PC-9 (cell line): ENCODE measurements at regions of chr2 and their contacts with region 1.

Region 1: DNA sequence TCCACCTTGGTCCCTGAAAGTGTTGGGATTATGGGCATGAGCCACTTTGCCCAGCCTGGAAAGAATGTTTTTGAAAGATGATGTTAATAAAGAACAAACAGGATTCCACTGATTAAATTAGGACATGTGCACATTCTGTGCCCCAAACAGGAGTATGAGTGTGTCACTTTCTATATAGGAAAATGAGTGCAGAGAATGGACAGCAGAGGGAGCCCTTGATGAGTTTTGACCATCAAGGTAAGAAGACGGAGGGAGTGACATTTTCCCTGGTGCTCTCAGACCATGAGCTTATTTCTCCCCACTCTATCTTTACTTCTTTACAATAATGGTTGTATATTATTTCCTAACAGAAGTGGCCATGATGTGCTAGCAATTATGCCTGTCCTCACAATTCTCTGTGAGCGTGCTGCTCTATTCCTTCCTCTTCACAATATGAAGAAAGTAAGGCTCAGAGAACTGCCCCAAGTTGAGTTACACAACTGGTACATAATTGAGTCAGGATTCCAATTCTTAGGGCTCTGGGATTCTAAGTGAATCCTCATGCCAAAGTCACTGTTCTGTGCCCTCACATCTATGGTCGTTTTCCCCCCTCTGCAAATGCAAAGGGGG is 20.6 kb downstream of the RPL37A start:
- DNase-seq: peak; percentile 53 to 64
- H3K4me3 ChIP-seq: no peak overlapping the region
- H3K27ac ChIP-seq: no peak overlapping the region
- H3K4me1 ChIP-seq: 0 out of 2 replicates have a peak, but pooled peaks cover 3% of the 10 kb centered on the region
- H3K27me3 ChIP-seq: no peaks in the 10 kb centered on the region
- CTCF ChIP-seq: peak; percentile 86

Region 2: GRCh38 chr2:216188956-216189355 is 330.3 kb before region 1 on chr2:
- CTCF ChIA-PET with region 1: no interaction called
- POLR2A ChIA-PET with region 1: no interaction called
- intact Hi-C with region 1: no loop called
- DNase-seq: peak in 1 of 2 experiments; percentile 36
- H3K4me3 ChIP-seq: no peak overlapping the region
- H3K27ac ChIP-seq: peak overlapping the region; percentile 37; the same call in 1 of the 2 replicates
- H3K4me1 ChIP-seq: 0 out of 2 replicates have a peak, but pooled peaks cover 10% of the 10 kb centered on the region
- H3K27me3 ChIP-seq: no peaks in the 10 kb centered on the region
- CTCF ChIP-seq: no peak

Region 3: GRCh38 chr2:216636551-216637450 is 117.5 kb after region 1 on chr2:
- CTCF ChIA-PET with region 1: no interaction called
- POLR2A ChIA-PET with region 1: no interaction called
- intact Hi-C with region 1: no loop called
- DNase-seq: peak; percentile 60 to 66
- H3K4me3 ChIP-seq: no peak overlapping the region; the same call in 1 of the 2 replicates
- H3K27ac ChIP-seq: no peak overlapping the region
- H3K4me1 ChIP-seq: peaks cover 42% of the 10 kb centered on the region
- H3K27me3 ChIP-seq: no peaks in the 10 kb centered on the region
- CTCF ChIP-seq: no peak

Region 4: DNA sequence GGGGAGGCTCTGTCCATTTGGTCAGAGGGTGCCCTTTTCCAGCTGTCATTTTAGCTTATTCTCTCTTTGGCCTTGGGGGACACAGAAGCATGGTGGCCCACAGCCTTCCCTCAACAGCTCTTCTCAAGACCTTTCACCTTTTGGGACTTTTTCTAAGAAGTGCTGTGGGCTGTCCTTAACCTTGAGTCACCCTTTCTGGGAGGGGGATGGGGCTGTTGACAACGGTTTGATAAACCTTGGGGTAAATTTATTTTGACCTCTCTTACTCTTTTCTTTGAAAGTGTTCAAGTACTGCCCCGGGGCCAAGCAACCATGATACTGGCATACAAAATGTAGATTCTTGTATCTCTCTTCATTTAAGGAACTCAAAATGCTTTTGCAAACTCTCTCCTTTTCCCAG is 162.4 kb after region 1 on chr2:
- CTCF ChIA-PET with region 1: interaction called, 13 read pairs
- POLR2A ChIA-PET with region 1: no interaction called
- intact Hi-C with region 1: no loop called
- DNase-seq: no peak
- H3K4me3 ChIP-seq: no peak overlapping the region
- H3K27ac ChIP-seq: 0 out of 2 replicates have a peak overlapping the region, but pooled peaks have one; percentile 10
- H3K4me1 ChIP-seq: peaks cover 17% of the 10 kb centered on the region
- H3K27me3 ChIP-seq: no peaks in the 10 kb centered on the region
- CTCF ChIP-seq: no peak